Caco-2 (cell line): ENCODE measurements at regions of chr1 and their contacts with region 1.

Region 1: GRCh38 chr1:155934097-155934935 is at the start of gene KHDC4:
- DNase-seq: peak; percentile 94 to 96
- H3K4me3 ChIP-seq: peak within 1 kb of the TSS; percentile 60
- H3K4me3 Mint-ChIP-seq: no peak within 1 kb of the TSS
- H3K27ac Mint-ChIP-seq: no peak within 1 kb of the TSS
- H3K4me1 ChIP-seq: peaks cover 20% of the 10 kb centered on the region
- H3K4me1 Mint-ChIP-seq: peaks cover 13% of the 10 kb centered on the region
- H3K27me3 ChIP-seq: no peaks in the 10 kb centered on the region
- H3K27me3 Mint-ChIP-seq: no peaks in the 10 kb centered on the region
- CTCF ChIP-seq: no peak
- total RNA-seq, gene KHDC4: 68.5 and 72.9 TPM in 2 replicates

Region 2: DNA sequence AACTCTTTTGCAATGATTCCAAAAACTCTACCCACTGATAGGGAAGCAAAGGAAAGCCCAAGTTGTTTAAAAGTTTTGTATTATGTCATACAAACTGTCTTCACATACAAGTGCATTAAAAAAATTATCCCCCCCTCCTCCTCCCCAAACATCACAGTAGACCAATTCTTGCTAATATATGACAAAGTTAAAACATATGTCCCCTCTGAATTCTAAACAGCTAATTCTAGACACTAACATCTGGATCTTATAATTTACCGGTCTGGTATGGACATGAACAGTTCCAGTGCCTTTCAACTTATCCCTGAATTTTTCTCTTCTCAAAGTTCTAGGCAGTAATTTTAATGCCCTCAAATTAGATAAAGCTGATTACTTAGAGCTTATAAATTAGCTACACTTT is 36.6 kb before region 1 on chr1:
- CTCF ChIA-PET with region 1: no interaction called
- POLR2A ChIA-PET with region 1: no interaction called
- intact Hi-C with region 1: no loop called
- DNase-seq: no peak
- H3K4me3 ChIP-seq: no peak overlapping the region
- H3K4me3 Mint-ChIP-seq: no peak overlapping the region
- H3K27ac Mint-ChIP-seq: no peak overlapping the region
- H3K4me1 ChIP-seq: 0 out of 2 replicates have a peak, but pooled peaks cover 10% of the 10 kb centered on the region
- H3K4me1 Mint-ChIP-seq: no peaks in the 10 kb centered on the region
- H3K27me3 ChIP-seq: no peaks in the 10 kb centered on the region
- H3K27me3 Mint-ChIP-seq: no peaks in the 10 kb centered on the region
- CTCF ChIP-seq: no peak

Region 3: DNA sequence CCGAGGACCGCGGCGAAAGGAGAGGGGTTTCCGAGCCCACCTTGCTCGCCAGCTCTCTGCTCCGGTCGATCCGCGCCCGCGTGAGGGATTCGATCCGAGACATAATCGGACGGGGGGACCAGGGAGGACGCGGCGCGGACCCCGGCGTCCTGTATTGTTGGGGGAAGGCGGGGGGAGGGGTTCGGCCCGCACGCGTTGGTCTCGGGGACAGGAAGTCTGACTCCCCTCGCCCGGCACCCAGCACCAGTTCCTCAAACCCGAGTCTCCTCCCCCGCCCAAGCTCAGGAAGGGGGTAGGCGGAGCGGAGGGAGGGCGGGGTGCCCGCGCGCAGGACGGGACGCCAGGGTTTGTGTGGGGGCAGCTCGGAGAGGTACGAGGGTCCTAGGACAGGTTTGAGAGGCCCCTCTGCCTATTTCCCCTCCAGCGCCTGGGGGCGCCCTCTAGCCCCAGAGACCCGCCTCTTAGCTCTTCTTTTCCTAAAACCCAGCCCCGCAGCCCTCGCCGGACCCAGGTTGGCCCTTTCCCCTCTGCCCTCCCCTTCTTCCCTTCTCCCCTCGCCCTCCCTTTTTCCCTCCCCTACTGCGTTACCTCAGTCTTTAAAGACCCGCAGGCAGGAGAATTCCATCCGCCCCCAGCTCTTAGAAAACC is 44.1 kb after region 1 on chr1 and contains the start of gene ARHGEF2:
- CTCF ChIA-PET with region 1: interaction called, 18 read pairs
- POLR2A ChIA-PET with region 1: interaction called, 8 read pairs
- intact Hi-C with region 1: loop called (anchors 2 kb)
- DNase-seq: peak; percentile 75 to 79
- H3K4me3 ChIP-seq: peak within 1 kb of the TSS; percentile 99
- H3K4me3 Mint-ChIP-seq: peak within 1 kb of the TSS; percentile 82
- H3K27ac Mint-ChIP-seq: peak within 1 kb of the TSS; percentile 50
- H3K4me1 ChIP-seq: peaks cover 41% of the 10 kb centered on the region
- H3K4me1 Mint-ChIP-seq: peaks cover 39% of the 10 kb centered on the region
- H3K27me3 ChIP-seq: no peaks in the 10 kb centered on the region
- H3K27me3 Mint-ChIP-seq: no peaks in the 10 kb centered on the region
- CTCF ChIP-seq: peak in 1 of 2 experiments; percentile 55
- total RNA-seq, gene ARHGEF2: 46.9 and 60.3 TPM in 2 replicates

Region 4: GRCh38 chr1:155989242-155990004 is 55.1 kb after region 1 on chr1:
- CTCF ChIA-PET with region 1: interaction called, 29 read pairs
- POLR2A ChIA-PET with region 1: interaction called, 6 read pairs
- intact Hi-C with region 1: loop called (anchors 1 kb)
- DNase-seq: peak; percentile 60 to 80
- H3K4me3 ChIP-seq: no peak overlapping the region
- H3K4me3 Mint-ChIP-seq: no peak overlapping the region
- H3K27ac Mint-ChIP-seq: no peak overlapping the region
- H3K4me1 ChIP-seq: peaks cover 4% of the 10 kb centered on the region
- H3K4me1 Mint-ChIP-seq: peaks cover 2% of the 10 kb centered on the region
- H3K27me3 ChIP-seq: no peaks in the 10 kb centered on the region
- H3K27me3 Mint-ChIP-seq: no peaks in the 10 kb centered on the region
- CTCF ChIP-seq: peak; percentile 94 to 98

Region 5: DNA sequence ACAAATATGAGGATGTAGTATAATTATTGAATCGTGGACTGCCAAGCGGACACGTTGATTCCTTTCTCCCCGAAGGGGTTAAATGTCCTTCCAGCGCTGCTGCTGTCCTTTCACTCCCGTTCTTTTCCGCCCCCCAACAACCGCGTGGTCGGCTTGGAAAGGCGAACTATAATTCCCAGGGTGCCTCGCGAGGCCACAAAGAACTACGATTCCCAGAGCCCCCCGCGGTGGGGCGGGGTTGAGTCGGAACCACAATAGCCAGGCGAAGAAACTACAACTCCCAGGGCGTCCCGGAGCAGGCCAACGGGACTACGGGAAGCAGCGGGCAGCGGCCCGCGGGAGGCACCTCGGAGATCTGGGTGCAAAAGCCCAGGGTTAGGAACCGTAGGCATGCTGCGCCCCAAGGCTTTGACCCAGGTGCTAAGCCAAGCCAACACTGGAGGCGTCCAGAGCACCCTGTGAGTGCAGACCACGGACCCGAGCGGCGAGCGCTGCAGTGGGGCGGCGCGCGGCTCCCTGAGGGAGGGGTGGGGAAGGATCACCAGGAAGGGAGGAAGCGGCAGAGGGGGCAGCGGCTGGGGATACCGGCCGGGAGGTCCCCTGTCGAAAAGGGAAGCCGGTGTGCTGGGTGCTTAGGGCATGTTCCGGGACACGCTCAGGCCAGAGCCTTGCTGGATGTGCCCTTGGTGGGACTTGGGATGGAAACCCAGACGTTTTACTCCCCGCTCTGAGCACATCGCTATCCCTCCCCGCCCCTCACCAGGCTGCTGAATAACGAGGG is 120.4 kb after region 1 on chr1 and contains the start of gene LAMTOR2:
- CTCF ChIA-PET with region 1: no interaction called
- POLR2A ChIA-PET with region 1: interaction called, 3 read pairs
- intact Hi-C with region 1: loop called (anchors 1 kb)
- DNase-seq: peak; percentile 98
- H3K4me3 ChIP-seq: peak within 1 kb of the TSS; percentile 86
- H3K4me3 Mint-ChIP-seq: peak within 1 kb of the TSS; percentile 98
- H3K27ac Mint-ChIP-seq: peak within 1 kb of the TSS; percentile 91
- H3K4me1 ChIP-seq: peaks cover 14% of the 10 kb centered on the region
- H3K4me1 Mint-ChIP-seq: no peaks in the 10 kb centered on the region
- H3K27me3 ChIP-seq: no peaks in the 10 kb centered on the region
- H3K27me3 Mint-ChIP-seq: no peaks in the 10 kb centered on the region
- CTCF ChIP-seq: peak in 1 of 2 experiments; percentile 5
- total RNA-seq, gene LAMTOR2: 49.4 and 49.5 TPM in 2 replicates

Region 6: GRCh38 chr1:156162430-156163037 is 228.2 kb after region 1 on chr1:
- CTCF ChIA-PET with region 1: no interaction called
- POLR2A ChIA-PET with region 1: interaction called, 12 read pairs
- intact Hi-C with region 1: no loop called
- DNase-seq: no peak
- H3K4me3 ChIP-seq: no peak overlapping the region
- H3K4me3 Mint-ChIP-seq: no peak overlapping the region
- H3K27ac Mint-ChIP-seq: no peak overlapping the region
- H3K4me1 ChIP-seq: no peaks in the 10 kb centered on the region
- H3K4me1 Mint-ChIP-seq: no peaks in the 10 kb centered on the region
- H3K27me3 ChIP-seq: no peaks in the 10 kb centered on the region
- H3K27me3 Mint-ChIP-seq: no peaks in the 10 kb centered on the region
- CTCF ChIP-seq: no peak